ENCODE measurements at regions of chr7 and their contacts with region 1.

Region 1: GRCh38 chr7:14495633-14496032 is 406.9 kb downstream of the DGKB start:
- DNase-seq: no peak
- H3K4me3 Mint-ChIP-seq: no peak overlapping the region
- H3K27ac Mint-ChIP-seq: no peak overlapping the region
- H3K4me1 Mint-ChIP-seq: no peaks in the 10 kb centered on the region
- H3K27me3 Mint-ChIP-seq: no peaks in the 10 kb centered on the region

Region 2: DNA sequence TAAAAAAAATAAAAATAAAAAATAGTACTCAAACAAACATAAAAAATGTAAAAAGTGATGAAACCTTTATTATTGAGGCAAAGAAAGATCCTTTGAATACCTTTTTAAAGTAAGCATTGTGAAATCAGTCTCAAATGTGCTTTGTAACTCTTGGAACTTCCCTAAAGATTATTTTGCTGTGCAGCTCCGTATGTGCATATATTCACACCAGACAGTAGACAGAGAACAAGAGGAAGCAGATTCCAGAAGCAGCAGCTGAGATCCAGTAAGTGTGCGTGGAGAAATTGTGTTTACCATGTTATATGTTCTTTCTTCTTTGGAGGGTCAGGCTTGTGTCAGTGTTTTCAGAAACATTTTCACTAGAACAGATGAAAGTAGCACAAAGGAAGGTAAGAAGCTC is 741.3 kb after region 1 on chr7:
- intact Hi-C with region 1: loop called (anchors 10 kb)
- DNase-seq: no peak
- H3K4me3 Mint-ChIP-seq: no peak overlapping the region
- H3K27ac Mint-ChIP-seq: no peak overlapping the region
- H3K4me1 Mint-ChIP-seq: no peaks in the 10 kb centered on the region
- H3K27me3 Mint-ChIP-seq: no peaks in the 10 kb centered on the region